Transverse colon (tissue), 4 donors: ENCODE measurements at regions of chr15 and their contacts with region 1.

Region 1: GRCh38 chr15:48149858-48150257 is 28.2 kb downstream of the MYEF2 start:
- DNase-seq: no peak
- H3K4me3 ChIP-seq: no peak overlapping the region
- H3K27ac ChIP-seq: no peak overlapping the region
- H3K4me1 ChIP-seq: peaks cover 0 to 8% (median 1%) of the 10 kb centered on the region in 4 donors
- H3K27me3 ChIP-seq: no peaks in the 10 kb centered on the region
- CTCF ChIP-seq: no peak
- EP300 ChIP-seq: no peak
- POLR2A ChIP-seq: no peak

Region 2: DNA sequence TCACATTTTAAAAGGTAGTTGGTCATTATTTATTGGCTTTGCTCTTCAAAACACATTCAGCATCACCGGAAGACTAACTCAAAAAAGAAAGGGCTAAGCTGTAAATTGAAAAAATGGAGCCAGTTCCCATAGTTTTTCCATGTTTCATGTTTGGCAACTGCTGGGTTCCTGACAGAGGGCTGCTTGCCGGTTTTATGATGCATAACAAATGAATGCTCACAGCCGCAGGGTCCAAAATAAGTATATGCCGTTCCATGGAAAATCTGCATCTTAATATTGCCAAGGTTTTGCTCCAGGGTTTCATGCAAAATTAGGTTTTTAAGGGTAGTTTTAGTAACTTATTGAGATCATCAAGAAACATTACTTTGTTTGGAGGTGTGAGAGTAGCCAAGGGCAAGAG is 72.0 kb after region 1 on chr15:
- in situ Hi-C with region 1: loop called in 1 of 4 experiments (anchors 10 kb)
- intact Hi-C with region 1: no loop called
- DNase-seq: no peak
- H3K4me3 ChIP-seq: no peak overlapping the region
- H3K27ac ChIP-seq: no peak overlapping the region
- H3K4me1 ChIP-seq: no peaks in the 10 kb centered on the region
- H3K27me3 ChIP-seq: no peaks in the 10 kb centered on the region
- CTCF ChIP-seq: no peak
- EP300 ChIP-seq: no peak
- POLR2A ChIP-seq: no peak